Brain microvascular endothelial cell (primary cell): ENCODE measurements at regions of chr7 and their contacts with region 1.

Region 1: GRCh38 chr7:121329191-121330052 is 622 bp downstream of the WNT16 start:
- DNase-seq: no peak
- H3K4me3 ChIP-seq: peak overlapping the region; percentile 64
- H3K27ac ChIP-seq: no peak overlapping the region
- H3K27me3 ChIP-seq: no peaks in the 10 kb centered on the region
- CTCF ChIP-seq: peak; percentile 58

Region 2: DNA sequence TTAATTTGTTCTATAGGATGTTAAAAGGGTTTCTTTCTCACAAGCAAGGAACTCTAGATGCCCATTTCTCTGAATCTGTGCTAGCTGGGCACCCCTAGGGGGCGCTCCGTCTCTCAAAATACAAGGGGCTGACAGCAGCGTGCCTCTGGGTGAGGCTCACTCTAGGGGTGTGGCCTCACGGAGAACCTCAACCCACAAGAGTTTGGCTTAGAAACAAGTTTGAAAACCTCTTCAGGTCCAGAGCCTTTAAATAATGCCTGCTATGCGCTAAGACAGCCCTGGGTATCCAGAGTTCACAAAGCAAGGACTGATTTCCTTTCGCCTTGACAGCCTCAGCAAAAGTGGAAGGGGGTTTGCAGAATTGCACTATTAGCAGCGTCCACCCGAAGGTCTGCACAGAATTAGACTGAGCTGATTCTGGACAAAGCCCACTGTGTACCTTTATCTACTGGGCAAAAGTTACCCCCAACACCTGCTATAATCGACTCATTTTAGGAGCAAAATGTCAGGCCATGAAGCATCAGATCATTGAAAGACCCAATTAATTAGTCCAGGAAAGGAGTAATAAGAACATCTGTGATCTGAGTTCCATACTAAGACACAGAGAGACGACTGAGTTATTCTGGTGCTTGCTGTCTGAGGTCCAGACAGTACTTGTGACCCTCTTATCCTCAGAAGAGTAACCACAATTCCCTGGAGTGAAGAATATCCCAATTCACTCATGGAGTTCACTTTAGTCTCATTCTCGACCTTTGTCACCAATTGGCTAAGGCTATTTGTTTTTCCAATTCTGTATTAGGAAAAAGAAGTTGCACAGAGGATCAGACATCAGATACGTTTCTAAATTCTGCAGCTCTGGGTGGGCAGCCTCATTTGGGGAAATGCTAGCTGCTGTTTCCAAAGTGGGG is 341.5 kb before region 1 on chr7:
- in situ Hi-C with region 1: loop called (anchors 25 kb)
- DNase-seq: peak; percentile 93
- H3K4me3 ChIP-seq: peak overlapping the region; percentile 61
- H3K27ac ChIP-seq: peak overlapping the region; percentile 48
- H3K27me3 ChIP-seq: no peaks in the 10 kb centered on the region
- CTCF ChIP-seq: peak; percentile 98

Region 3: GRCh38 chr7:121138262-121138933 is 191.0 kb before region 1 on chr7:
- in situ Hi-C with region 1: loop called (anchors 25 kb)
- DNase-seq: no peak
- H3K4me3 ChIP-seq: no peak overlapping the region
- H3K27ac ChIP-seq: no peak overlapping the region
- H3K27me3 ChIP-seq: no peaks in the 10 kb centered on the region
- CTCF ChIP-seq: no peak